Left ventricle myocardium superior (tissue), 1 donor: ENCODE measurements at regions of chr16 and their contacts with region 1.

Region 1: GRCh38 chr16:71870818-71871217 is 13.2 kb downstream of the ZNF821 start:
- DNase-seq: no peak
- ATAC-seq: no peak

Region 2: GRCh38 chr16:71961066-71962039 is 90.5 kb after region 1 on chr16:
- intact Hi-C with region 1: loop called (anchors 10 kb)
- DNase-seq: peak; percentile 85
- ATAC-seq: peak; percentile 96